ENCODE measurements at regions of chr4 and their contacts with region 1.

Region 1: DNA sequence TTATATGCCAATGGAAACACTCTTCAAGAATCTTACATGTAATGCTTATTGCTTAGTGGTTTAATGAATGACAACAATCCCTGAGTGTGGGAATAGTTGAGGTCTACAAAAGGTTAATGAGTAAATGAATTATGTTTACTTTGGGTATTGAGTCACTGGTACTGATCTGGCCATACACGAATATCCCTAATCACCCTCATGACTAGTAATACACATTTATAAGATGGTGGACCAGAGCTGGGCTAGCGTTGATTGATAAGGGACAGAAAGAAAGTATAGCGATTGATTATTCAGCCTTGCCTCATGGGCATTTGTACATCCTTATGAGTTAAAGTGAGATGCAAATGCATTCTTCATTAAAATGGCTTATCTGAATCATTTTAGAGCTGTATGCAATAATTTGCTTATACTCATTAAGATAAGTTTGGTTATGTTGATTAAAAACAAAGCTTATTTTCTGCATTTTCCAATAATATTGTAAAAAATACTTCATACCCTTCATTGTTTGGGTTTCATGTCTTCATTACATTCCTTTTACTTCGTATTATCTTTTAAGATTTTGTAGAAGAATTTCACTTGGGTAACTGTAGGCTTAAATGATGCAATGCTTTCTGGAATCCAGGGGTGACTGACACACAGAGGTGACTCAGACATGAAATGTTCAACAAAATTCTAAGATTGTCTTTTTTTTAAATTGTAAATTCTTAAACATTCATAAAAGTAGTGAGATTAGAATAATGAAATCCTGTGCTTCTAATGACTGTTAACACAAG is 47.4 kb downstream of the FGF2 start:
- DNase-seq: peak; percentile 5
- ATAC-seq: no peak
- H3K4me3 ChIP-seq: no peak overlapping the region
- H3K27ac ChIP-seq: no peak overlapping the region
- H3K4me1 ChIP-seq: peaks cover 6% of the 10 kb centered on the region; the same call in 1 of the 2 replicates
- H3K27me3 ChIP-seq: no peaks in the 10 kb centered on the region
- CTCF ChIP-seq: no peak
- EP300 ChIP-seq: no peak
- POLR2A ChIP-seq: no peak
- RAD21 ChIP-seq: no peak

Region 2: DNA sequence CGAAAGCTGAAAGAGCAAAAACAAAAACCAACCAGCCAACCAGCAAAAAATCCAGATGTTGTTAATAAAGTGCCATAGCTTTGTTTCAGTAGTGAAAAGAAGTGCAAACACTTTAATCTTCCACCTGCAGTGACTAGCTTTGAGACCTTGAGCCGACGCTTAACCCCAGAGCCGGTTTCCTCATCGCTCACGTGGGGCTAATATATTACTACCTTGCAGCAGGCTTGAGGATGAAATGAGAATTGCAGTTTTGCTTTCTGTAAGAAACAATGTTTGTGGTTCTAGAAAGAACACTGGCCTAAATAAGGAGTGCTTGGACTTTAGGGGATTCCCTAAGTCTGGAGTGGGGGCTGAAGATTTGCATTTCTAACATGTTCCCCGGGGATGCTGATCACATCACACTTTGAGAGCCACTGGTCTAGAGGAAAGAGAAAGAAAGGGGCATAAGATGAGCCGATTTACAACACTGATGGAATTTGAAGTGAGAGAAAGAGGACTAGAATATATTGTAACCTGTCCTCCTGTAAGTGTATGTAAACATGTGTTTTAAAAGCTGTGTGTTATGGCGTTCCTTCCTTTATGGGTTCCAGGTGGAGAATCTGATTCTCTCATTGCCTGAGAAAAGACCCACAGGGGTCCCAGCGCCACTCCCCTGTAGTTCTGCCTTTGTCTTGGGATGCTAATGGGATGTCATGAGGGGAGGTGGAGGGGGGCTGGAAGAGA is 46.0 kb before region 1 on chr4:
- CTCF ChIA-PET with region 1: no interaction called
- POLR2A ChIA-PET with region 1: no interaction called
- in situ Hi-C with region 1: no loop called
- intact Hi-C with region 1: loop called (anchors 1 kb)
- DNase-seq: peak; percentile 11
- ATAC-seq: peak; percentile 84
- H3K4me3 ChIP-seq: peak overlapping the region in 2 of 3 experiments; percentile 55 to 72; a peak in 3 of 6 replicates
- H3K27ac ChIP-seq: no peak overlapping the region
- H3K4me1 ChIP-seq: peaks cover 12% of the 10 kb centered on the region
- H3K27me3 ChIP-seq: peaks cover 4 to 33% of the 10 kb centered on the region in 2 experiments
- CTCF ChIP-seq: no peak
- EP300 ChIP-seq: no peak
- POLR2A ChIP-seq: no peak
- RAD21 ChIP-seq: no peak